Activated CD8-positive, alpha-beta T cell treated with anti-CD3 and anti-CD28 coated beads for 36 hours (primary cell): ENCODE measurements at regions of chr10 and their contacts with region 1.

Region 1: DNA sequence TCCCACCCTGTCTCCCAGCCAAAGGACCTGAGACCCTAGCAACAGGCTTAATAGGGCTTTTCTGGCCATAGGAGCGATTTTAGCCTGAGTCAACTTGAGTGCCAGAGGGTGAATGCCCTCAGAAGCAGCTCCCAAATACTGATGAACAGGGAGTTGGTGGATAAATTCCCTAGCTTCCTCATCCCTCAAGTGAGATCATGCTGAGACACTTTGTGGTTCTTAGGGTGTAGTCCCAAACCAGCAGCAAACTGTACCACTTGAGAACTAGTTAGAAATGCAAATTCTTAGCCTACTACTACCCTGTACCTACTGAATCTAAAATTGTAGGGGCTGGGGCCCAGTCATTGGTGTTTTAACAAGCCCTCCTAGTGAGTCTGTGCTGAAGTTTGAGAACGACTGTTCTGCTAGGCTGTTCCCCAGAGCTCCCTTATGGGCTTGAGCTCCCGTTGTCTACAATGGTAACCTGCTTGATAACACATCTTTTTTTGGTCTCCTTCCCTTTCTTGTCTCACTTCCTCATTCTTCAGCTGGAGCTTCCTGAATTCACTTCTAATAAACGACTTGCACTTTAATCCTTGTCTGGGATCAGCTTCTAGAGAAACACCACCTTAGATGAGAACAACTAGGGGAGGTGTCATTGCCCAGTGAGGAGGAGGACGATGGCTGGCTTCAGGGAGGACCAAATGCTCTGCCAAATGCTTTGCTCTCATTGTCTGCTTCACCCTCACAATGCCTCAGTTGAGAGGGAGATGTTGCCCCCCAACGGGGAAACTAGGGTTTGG is 18.2 kb upstream of the CDH23 start:
- DNase-seq: no peak
- ATAC-seq: no peak
- H3K4me3 Mint-ChIP-seq: no peak overlapping the region
- H3K27ac Mint-ChIP-seq: no peak overlapping the region
- H3K4me1 Mint-ChIP-seq: peaks cover 8% of the 10 kb centered on the region
- H3K27me3 Mint-ChIP-seq: no peaks in the 10 kb centered on the region
- CTCF ChIP-seq: no peak

Region 2: GRCh38 chr10:71314028-71314693 is 64.4 kb before region 1 on chr10:
- CTCF ChIA-PET with region 1: interaction called, 15 read pairs
- POLR2A ChIA-PET with region 1: interaction called, 3 read pairs
- intact Hi-C with region 1: loop called (anchors 5 kb)
- DNase-seq: peak; percentile 48
- ATAC-seq: peak; percentile 25
- H3K4me3 Mint-ChIP-seq: no peak overlapping the region
- H3K27ac Mint-ChIP-seq: no peak overlapping the region
- H3K4me1 Mint-ChIP-seq: peaks cover 20% of the 10 kb centered on the region
- H3K27me3 Mint-ChIP-seq: peaks cover 5% of the 10 kb centered on the region
- CTCF ChIP-seq: peak; percentile 92

Region 3: GRCh38 chr10:71319042-71319799 is 59.3 kb before region 1 on chr10 and contains the start of gene SLC29A3:
- CTCF ChIA-PET with region 1: interaction called, 15 read pairs
- POLR2A ChIA-PET with region 1: interaction called, 3 read pairs
- intact Hi-C with region 1: loop called (anchors 5 kb)
- DNase-seq: peak; percentile 93
- ATAC-seq: peak; percentile 90
- H3K4me3 Mint-ChIP-seq: peak within 1 kb of the TSS; percentile 89
- H3K27ac Mint-ChIP-seq: peak within 1 kb of the TSS; percentile 81
- H3K4me1 Mint-ChIP-seq: peaks cover 41% of the 10 kb centered on the region
- H3K27me3 Mint-ChIP-seq: no peaks in the 10 kb centered on the region
- CTCF ChIP-seq: no peak
- total RNA-seq, gene SLC29A3: 2.9 to 3.3 TPM

Region 4: GRCh38 chr10:71396084-71396720 is 17.7 kb after region 1 on chr10:
- CTCF ChIA-PET with region 1: interaction called, 60 read pairs
- POLR2A ChIA-PET with region 1: interaction called, 3 read pairs
- intact Hi-C with region 1: no loop called
- DNase-seq: peak; percentile 59
- ATAC-seq: peak; percentile 80
- H3K4me3 Mint-ChIP-seq: peak overlapping the region; percentile 22
- H3K27ac Mint-ChIP-seq: no peak overlapping the region
- H3K4me1 Mint-ChIP-seq: no peaks in the 10 kb centered on the region
- H3K27me3 Mint-ChIP-seq: peaks cover 51% of the 10 kb centered on the region
- CTCF ChIP-seq: peak; percentile 4